ENCODE measurements at regions of chr7 and their contacts with region 1.

Region 1: DNA sequence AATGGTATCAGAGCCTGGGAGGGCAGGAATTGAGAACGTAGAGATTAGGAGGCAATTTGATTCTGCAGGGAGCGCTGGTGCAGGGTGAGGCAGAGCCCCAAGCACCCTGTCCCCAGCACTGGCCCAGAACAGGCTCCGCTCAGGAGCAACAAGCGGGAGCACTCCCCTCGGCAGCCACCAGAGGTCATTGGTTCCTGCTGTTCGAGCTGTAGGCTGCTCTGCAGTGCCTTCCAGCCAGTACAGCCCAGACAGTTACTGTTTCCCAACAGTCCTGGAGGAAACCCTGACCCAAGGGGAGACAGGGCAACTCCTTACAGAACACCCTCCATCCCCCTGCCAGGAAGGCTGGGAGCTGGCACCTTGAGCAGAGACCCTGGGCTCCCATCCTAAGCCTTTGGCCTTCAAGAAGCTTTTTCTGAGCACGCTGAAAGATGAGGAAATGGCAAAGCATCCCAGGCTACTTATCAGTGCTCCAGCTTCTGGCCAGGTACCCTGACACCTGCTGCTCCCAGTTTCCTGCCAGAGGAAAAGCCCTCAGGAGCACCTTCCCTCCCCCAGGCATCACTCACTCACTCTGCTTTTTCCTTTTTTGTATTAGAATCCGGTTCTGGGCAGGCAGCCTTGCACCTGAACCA is 71.2 kb upstream of the EFCAB10 start:
- DNase-seq: peak; percentile 79
- H3K4me3 Mint-ChIP-seq: no peak overlapping the region
- H3K27ac Mint-ChIP-seq: no peak overlapping the region
- H3K4me1 Mint-ChIP-seq: peaks cover 12% of the 10 kb centered on the region
- H3K27me3 Mint-ChIP-seq: no peaks in the 10 kb centered on the region

Region 2: GRCh38 chr7:105559926-105560325 is 92.5 kb before region 1 on chr7:
- CTCF ChIA-PET with region 1: no interaction called
- DNase-seq: no peak
- H3K4me3 Mint-ChIP-seq: no peak overlapping the region
- H3K27ac Mint-ChIP-seq: peak overlapping the region; percentile 5
- H3K4me1 Mint-ChIP-seq: no peaks in the 10 kb centered on the region
- H3K27me3 Mint-ChIP-seq: no peaks in the 10 kb centered on the region

Region 3: DNA sequence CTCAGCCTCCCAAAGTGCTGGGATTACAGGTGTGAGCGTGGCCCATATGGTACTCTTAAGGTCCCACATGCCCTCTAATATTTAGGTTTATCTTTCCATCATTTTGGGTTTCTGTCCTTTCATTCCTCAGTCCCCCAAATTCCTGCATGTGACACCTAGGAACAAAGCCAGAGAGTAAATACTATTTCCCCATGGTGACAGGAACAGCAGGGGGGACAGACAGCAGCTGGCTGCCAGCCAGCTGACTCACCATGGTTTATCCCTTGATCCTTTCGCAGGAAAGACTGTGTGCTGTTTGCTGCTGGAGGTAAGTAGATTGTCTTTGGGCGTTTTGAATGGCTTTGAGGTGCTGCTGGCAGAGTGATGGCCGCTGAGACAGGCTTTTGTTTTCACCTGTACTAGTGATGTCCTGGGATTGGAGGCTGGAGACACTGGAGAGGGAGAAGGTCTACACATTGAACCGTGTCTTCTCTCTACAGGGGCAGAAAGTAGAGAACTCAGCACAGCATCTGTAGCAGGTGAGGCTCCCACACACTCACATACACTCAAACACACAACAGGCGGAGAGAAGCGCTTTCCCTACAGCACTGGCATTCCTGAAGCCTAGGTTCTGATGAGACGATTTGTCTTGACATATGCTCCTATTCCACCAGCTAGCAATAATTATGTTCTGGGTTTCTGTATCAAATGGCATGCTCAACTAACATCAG is 12.5 kb after region 1 on chr7:
- CTCF ChIA-PET with region 1: interaction called, 23 read pairs
- DNase-seq: no peak
- H3K4me3 Mint-ChIP-seq: no peak overlapping the region
- H3K27ac Mint-ChIP-seq: no peak overlapping the region
- H3K4me1 Mint-ChIP-seq: peaks cover 3% of the 10 kb centered on the region
- H3K27me3 Mint-ChIP-seq: no peaks in the 10 kb centered on the region

Region 4: DNA sequence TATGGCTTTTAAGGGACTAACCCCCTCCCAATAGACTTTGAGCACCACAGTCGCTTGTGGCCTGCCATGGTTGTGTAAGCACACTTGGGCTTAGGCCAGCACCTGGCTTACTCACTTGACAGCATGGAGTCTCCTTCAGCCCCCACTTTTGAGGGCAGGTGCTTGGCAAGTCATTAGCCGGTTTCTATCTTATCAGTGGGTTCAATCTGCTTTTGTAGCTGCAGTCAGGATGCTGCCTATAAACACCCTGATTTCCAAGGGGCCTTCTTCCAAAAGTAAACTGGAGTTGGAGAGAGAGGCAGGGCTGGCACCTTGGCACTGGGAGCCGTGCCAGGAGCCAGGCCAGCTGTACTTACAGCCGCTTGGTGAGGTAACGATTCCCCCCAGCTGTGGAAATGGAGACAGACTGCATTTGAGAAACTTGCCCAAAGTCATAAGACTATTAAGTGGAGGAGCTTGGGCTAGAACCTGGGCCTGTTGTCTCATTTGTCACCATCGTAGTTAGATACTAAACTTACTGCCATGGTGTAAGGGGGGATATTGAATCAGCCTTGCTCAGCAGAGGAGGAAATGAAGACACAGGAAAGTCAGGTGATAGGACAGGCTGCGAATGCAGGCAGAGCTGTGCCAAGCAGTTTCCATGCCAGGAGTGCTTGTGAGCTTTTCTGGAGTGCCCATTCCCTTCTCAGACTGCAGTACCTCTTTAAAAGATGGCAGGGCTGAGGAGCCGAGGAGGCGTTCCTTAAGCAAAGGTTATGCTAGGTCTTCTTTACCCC is 21.1 kb after region 1 on chr7:
- CTCF ChIA-PET with region 1: interaction called, 31 read pairs
- DNase-seq: no peak
- H3K4me3 Mint-ChIP-seq: no peak overlapping the region
- H3K27ac Mint-ChIP-seq: peak overlapping the region; percentile 28
- H3K4me1 Mint-ChIP-seq: peaks cover 64% of the 10 kb centered on the region
- H3K27me3 Mint-ChIP-seq: no peaks in the 10 kb centered on the region

Region 5: GRCh38 chr7:105678811-105679495 is 26.5 kb after region 1 on chr7:
- CTCF ChIA-PET with region 1: interaction called, 31 read pairs
- DNase-seq: peak; percentile 56
- H3K4me3 Mint-ChIP-seq: peak overlapping the region; percentile 83
- H3K27ac Mint-ChIP-seq: peak overlapping the region; percentile 94
- H3K4me1 Mint-ChIP-seq: peaks cover 58% of the 10 kb centered on the region
- H3K27me3 Mint-ChIP-seq: no peaks in the 10 kb centered on the region

Region 6: DNA sequence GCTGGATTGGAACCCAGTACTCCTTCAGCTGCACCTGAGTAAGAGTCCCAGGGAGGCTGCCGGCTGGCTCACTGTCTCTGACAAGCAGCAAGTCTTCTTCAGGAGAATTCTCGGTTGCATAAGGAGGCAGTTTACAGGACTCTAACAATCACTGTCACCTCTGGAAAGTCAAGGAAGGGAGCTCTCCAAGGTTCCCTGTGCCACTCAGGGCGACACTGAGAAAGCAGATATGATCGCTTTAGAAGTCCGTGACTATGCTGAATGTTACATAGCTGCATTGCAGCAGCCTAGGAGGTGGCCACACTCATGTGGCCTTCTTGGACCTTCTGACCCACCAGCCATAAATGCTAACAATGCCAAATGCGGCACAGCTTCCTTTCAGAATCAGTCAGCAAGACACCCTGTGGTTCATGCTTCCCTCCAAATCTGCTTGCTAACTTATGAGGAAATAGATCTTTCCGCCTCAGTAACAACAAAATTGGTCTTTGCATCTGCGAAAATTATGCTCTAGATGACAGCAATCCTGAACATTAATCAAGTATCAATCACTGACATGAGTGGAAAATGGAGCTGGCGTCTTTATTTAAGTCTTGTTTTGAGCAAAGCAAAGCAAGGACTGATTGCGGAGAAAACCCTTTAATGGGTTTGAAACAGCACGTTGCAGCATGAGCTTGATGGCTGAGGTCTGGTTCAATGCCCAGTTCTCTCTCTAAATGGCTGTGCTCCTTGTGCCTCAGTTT is 91.0 kb after region 1 on chr7:
- CTCF ChIA-PET with region 1: interaction called, 15 read pairs
- DNase-seq: no peak
- H3K4me3 Mint-ChIP-seq: no peak overlapping the region
- H3K27ac Mint-ChIP-seq: no peak overlapping the region
- H3K4me1 Mint-ChIP-seq: peaks cover 19% of the 10 kb centered on the region
- H3K27me3 Mint-ChIP-seq: peaks cover 5% of the 10 kb centered on the region

Region 7: DNA sequence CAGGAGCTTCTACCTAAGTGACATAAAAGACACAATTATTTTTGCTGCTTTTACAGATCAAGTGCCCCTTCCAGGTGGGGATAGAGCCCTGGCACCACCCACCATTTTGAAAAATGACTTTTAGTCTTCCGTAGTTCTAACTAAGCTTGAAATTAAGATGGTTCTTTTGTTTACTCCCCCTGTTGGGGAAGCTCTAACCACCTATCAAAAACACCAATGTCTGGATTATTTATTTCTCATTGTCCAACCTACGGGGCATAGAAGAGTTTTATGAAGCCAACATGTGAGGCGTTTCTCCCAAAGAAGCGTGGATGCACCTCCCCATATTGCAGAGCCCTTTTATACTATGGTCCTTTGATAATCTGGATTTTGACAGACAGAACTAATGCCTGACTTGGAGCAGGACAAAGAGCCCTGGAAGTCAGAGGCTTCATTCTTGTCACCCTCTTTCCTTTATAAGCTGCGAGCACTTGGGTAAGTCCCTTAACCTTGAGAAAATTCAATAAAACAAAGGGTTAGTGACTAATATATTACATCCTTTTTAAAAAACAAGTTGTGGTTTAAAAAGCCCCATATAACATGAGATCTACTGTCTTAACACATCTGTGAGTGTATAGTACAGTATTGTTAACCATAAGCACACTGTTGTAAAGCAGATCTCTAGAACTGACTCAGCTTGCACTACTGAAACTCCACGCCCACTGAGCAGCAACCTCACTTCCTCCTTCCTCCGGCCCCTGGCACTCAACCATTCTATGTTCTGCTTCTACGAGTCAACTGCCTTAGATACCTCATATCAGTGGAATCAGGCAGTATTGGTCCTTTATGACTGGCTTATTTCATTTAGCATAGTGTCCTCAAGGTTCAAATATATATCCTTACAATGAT is 156.5 kb after region 1 on chr7:
- CTCF ChIA-PET with region 1: interaction called, 10 read pairs
- DNase-seq: peak; percentile 87
- H3K4me3 Mint-ChIP-seq: peak overlapping the region; percentile 0
- H3K27ac Mint-ChIP-seq: peak overlapping the region; percentile 95
- H3K4me1 Mint-ChIP-seq: peaks cover 63% of the 10 kb centered on the region
- H3K27me3 Mint-ChIP-seq: peaks cover 6% of the 10 kb centered on the region

Region 8: DNA sequence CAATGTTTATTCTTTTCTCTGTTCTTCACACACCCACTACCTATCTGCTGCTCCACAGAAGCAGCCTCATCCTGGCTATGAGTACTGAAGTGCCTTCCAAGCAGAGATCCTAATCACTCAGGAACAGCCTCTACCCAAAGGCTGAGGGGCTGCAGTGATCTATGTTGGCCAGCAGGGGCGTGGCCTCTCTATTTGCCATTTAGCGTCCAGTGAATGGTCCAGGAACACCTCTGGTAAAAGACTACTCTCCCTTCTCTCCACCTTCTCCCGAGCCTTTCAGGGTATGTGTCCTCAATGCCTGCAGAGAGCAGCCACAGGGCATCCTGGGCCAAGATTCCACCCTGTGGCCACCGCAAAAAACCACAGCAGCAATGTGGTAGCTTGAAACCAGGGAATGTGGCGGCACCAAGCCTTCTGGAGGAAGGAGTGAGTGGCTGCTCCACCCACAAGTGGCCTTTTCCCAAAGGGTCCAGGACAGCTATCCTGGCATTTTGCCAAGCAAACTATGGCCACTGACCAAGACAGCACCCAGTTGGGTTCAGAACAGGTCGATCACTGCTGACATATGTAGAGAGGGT is 388.8 kb after region 1 on chr7:
- CTCF ChIA-PET with region 1: interaction called, 31 read pairs
- DNase-seq: peak; percentile 46
- H3K4me3 Mint-ChIP-seq: no peak overlapping the region
- H3K27ac Mint-ChIP-seq: no peak overlapping the region
- H3K4me1 Mint-ChIP-seq: peaks cover 33% of the 10 kb centered on the region
- H3K27me3 Mint-ChIP-seq: peaks cover 57% of the 10 kb centered on the region